Thyroid gland (tissue), 4 donors: ENCODE measurements at regions of chr6 and their contacts with region 1.

Region 1: GRCh38 chr6:79813854-79814709 is 133.3 kb downstream of the ELOVL4 start:
- DNase-seq: peak; percentile 81 to 85
- H3K4me3 ChIP-seq: no peak overlapping the region
- H3K27ac ChIP-seq: no peak overlapping the region
- H3K4me1 ChIP-seq: peaks cover 6 to 9% of the 10 kb centered on the region in 2 donors
- H3K27me3 ChIP-seq: no peaks in the 10 kb centered on the region
- CTCF ChIP-seq: peak; percentile 71 to 85 (median 79)
- POLR2A ChIP-seq: no peak

Region 2: DNA sequence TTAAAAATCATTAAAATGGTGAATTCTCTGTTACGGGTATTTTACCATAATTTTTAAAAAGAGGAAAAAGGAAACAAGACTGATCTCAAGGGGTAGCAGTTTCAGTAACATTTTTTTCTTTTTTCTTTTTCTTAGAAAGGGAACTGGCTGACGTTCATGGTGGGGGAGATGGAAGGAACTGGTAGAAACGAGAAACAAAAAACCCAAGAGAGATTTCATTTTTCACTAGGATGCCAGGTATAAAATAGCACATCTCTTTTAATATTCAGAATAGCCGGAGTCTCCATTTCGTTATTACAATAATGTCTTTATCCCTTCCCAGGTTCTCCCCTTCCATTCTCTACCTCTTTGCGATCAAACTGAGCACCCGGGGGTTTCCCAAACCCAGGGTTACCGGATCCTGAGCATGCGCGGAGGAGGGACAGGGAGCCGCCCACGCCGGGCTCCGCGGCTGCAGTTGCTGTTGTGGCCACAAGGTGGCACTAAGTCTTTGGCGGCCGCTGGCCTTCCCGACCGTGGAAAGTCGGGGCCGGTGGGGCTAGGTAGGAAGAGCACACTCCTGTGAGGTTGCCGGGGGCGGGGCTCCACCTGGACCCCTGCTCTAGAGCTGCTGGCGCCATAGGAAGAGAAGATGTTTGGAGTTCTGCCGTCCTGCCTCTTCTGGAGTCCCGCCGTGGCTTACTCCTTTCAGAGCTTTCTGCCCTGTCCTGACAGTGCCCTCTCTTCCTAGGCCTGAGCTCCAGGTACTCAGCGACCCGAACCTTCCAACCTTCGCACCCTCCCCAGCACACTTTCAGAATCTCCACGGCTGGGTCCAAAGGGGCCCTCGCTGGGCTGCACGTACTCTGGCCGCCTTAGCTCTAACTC is 36.1 kb before region 1 on chr6:
- intact Hi-C with region 1: loop called (anchors 5 kb)
- DNase-seq: peak; percentile 74 to 80
- H3K4me3 ChIP-seq: peak overlapping the region in 1 of 3 donors; percentile 26
- H3K27ac ChIP-seq: no peak overlapping the region
- H3K4me1 ChIP-seq: peaks cover 0 to 5% of the 10 kb centered on the region in 2 donors
- H3K27me3 ChIP-seq: no peaks in the 10 kb centered on the region
- CTCF ChIP-seq: peak; percentile 80 to 99 (median 93)
- POLR2A ChIP-seq: no peak